ENCODE measurements at regions of chr2 and their contacts with region 1.

Region 1: GRCh38 chr2:219186754-219187456 is 8.8 kb downstream of the RETREG2 start:
- DNase-seq: no peak
- H3K4me3 Mint-ChIP-seq: no peak overlapping the region
- H3K27ac Mint-ChIP-seq: no peak overlapping the region
- H3K4me1 Mint-ChIP-seq: peaks cover 30% of the 10 kb centered on the region
- H3K27me3 Mint-ChIP-seq: no peaks in the 10 kb centered on the region

Region 2: DNA sequence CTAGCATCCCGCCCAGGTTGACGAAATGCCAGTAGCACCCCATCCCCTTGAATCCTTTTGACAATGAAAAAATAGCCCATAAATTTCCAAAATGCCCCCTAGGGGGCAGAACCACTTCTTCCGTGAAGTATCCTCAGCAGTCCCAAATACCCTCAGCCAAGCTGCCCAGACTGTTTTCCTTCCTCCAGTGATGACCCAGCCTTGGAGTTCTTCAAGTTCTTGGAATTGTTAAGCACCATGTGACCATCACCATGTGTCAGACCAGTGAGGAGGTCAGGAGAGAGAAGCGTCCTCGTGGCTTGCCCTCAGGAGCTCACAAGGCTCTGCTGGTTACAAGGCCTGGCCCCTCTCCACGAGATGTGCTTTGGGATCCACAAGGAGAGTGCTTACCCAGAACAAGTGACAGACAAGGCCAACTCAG is 15.7 kb before region 1 on chr2:
- CTCF ChIA-PET with region 1: interaction called, 10 read pairs
- POLR2A ChIA-PET with region 1: no interaction called
- DNase-seq: peak; percentile 56
- H3K4me3 Mint-ChIP-seq: no peak overlapping the region
- H3K27ac Mint-ChIP-seq: no peak overlapping the region
- H3K4me1 Mint-ChIP-seq: peaks cover 32% of the 10 kb centered on the region
- H3K27me3 Mint-ChIP-seq: no peaks in the 10 kb centered on the region

Measured in activated CD4-positive, alpha-beta T cell treated with anti-CD3 and anti-CD28 coated beads, Interleukin-2, amount 10 ng/mL, durations not matched to agents 7 days and 5 days (primary cell).